ENCODE measurements at regions of chr18 and their contacts with region 1.

Region 1: GRCh38 chr18:59056706-59057492 is 82.8 kb upstream of the SEC11C start:
- DNase-seq: peak; percentile 78 to 85 (median 80)
- ATAC-seq: peak in 3 of 4 donors; percentile 68 to 74 (median 69)
- H3K4me3 ChIP-seq: no peak overlapping the region
- H3K27ac ChIP-seq: no peak overlapping the region
- H3K4me1 ChIP-seq: peaks cover 0 to 26% (median 6%) of the 10 kb centered on the region in 12 donors
- H3K27me3 ChIP-seq: no peaks in the 10 kb centered on the region
- CTCF ChIP-seq: peak in 11 of 12 donors; percentile 58 to 93 (median 80)
- POLR2A ChIP-seq: no peak

Region 2: DNA sequence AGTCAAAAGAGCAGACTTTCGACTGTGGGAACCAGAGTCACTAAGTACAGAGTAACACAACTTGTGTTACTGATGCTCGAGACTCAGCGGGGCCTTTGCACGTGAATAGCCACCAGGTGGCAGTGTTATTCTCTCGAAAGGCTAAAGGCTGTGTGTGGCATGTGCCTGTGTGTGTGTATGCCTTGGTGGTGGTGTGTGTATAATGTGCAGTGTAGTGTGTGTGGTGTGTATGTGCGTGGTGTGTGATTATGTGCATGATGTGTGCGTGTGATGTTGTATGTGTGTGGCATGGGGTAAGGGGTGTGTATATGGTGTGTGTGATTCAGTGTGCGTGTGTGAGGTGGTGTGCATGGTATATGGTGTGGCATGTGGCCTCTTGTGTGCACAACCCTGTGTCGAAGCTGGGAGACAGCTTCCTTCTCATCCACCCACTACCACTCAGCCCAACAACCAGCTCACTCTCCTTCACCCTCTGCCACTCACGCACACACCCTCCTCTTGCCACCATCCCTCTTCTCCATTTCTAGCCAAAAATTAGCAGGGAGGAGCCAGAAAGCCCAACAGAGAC is 275.2 kb before region 1 on chr18:
- intact Hi-C with region 1: loop called in 6 of 10 experiments (anchors 1 to 5 kb)
- DNase-seq: peak; percentile 75 to 82 (median 77)
- ATAC-seq: peak; percentile 86 to 91 (median 90)
- H3K4me3 ChIP-seq: no peak overlapping the region
- H3K27ac ChIP-seq: peak overlapping the region in 2 of 12 donors; percentile 21 to 58
- H3K4me1 ChIP-seq: peaks cover 0 to 28% (median 12%) of the 10 kb centered on the region in 12 donors
- H3K27me3 ChIP-seq: no peaks in the 10 kb centered on the region
- CTCF ChIP-seq: peak; percentile 84 to 97 (median 92)
- POLR2A ChIP-seq: no peak

Region 3: GRCh38 chr18:58847383-58848071 is 209.4 kb before region 1 on chr18:
- intact Hi-C with region 1: loop called in 1 of 10 experiments (anchors 5 kb)
- DNase-seq: peak; percentile 55 to 71 (median 63)
- ATAC-seq: peak in 3 of 4 donors; percentile 52 to 66 (median 60)
- H3K4me3 ChIP-seq: peak overlapping the region in 11 of 12 donors; percentile 2 to 54 (median 45)
- H3K27ac ChIP-seq: peak overlapping the region in 10 of 12 donors; percentile 1 to 70 (median 56)
- H3K4me1 ChIP-seq: peaks cover 0 to 36% (median 13%) of the 10 kb centered on the region in 12 donors
- H3K27me3 ChIP-seq: no peaks in the 10 kb centered on the region
- CTCF ChIP-seq: no peak
- POLR2A ChIP-seq: no peak

Region 4: DNA sequence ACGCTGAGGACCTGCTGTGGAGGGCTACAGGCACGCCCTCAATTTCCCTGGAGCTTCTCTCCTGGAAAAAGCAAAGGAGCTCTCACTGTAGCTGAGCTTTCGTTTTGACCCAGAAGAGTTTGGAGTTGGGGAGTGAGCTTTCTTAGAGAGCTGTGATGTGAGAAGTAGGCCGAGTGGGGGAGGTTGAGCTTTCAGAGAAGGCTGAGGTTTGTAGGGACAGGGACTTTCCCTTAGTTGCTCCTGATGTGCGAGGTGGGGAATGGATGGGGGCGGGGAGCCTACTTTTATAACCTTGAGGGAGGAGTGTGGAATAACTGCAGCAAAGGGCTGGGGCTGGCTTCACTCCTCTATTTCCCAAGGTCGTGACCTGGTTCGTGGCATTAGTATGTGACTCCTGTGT is 145.1 kb before region 1 on chr18:
- intact Hi-C with region 1: loop called in 1 of 10 experiments (anchors 5 kb)
- DNase-seq: peak in 2 of 5 donors; percentile 37 to 54
- ATAC-seq: peak in 3 of 4 donors; percentile 51 to 79 (median 61)
- H3K4me3 ChIP-seq: peak overlapping the region in 4 of 12 donors; percentile 10 to 17 (median 17)
- H3K27ac ChIP-seq: peak overlapping the region; percentile 14 to 84 (median 79)
- H3K4me1 ChIP-seq: peaks cover 5 to 72% (median 45%) of the 10 kb centered on the region in 12 donors
- H3K27me3 ChIP-seq: no peaks in the 10 kb centered on the region
- CTCF ChIP-seq: no peak
- POLR2A ChIP-seq: no peak

Region 5: GRCh38 chr18:58991167-58991798 is 65.6 kb before region 1 on chr18:
- intact Hi-C with region 1: loop called in 4 of 10 experiments (anchors 5 to 10 kb)
- DNase-seq: no peak
- ATAC-seq: peak; percentile 18 to 64 (median 60)
- H3K4me3 ChIP-seq: no peak overlapping the region
- H3K27ac ChIP-seq: peak overlapping the region in 11 of 12 donors; percentile 58 to 95 (median 82)
- H3K4me1 ChIP-seq: peaks cover 14 to 65% (median 48%) of the 10 kb centered on the region in 12 donors
- H3K27me3 ChIP-seq: no peaks in the 10 kb centered on the region
- CTCF ChIP-seq: peak in 2 of 12 donors; percentile 8 to 26
- POLR2A ChIP-seq: no peak

Region 6: DNA sequence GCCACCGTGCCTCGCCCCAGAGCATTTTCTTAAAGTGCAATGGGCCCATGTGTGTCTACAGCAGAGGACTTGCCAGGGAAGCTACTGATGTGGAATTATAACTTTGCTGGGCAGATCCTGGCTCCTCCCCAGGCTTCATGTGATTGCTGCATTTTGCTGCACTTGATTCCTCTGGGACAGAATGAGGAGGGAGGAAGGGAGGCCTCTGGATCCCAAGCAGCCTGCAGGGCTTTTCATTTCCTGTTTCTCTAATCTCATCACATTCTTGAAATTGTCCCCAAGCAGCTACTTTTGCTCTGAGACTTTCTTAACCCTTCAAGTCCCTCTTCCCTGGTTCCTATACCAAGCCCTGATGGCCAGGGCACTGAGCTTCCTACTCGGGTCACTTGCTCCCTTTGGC is 51.6 kb before region 1 on chr18:
- intact Hi-C with region 1: loop called in 2 of 10 experiments (anchors 10 kb)
- DNase-seq: peak in 4 of 5 donors; percentile 64 to 82 (median 77)
- ATAC-seq: peak; percentile 78 to 85 (median 83)
- H3K4me3 ChIP-seq: no peak overlapping the region
- H3K27ac ChIP-seq: peak overlapping the region; percentile 48 to 88 (median 72)
- H3K4me1 ChIP-seq: peaks cover 0 to 41% (median 14%) of the 10 kb centered on the region in 12 donors
- H3K27me3 ChIP-seq: no peaks in the 10 kb centered on the region
- CTCF ChIP-seq: no peak
- POLR2A ChIP-seq: peak in 1 of 2 donors; percentile 18